HEK293T (cell line): ENCODE measurements at regions of chr3 and their contacts with region 1.

Region 1: DNA sequence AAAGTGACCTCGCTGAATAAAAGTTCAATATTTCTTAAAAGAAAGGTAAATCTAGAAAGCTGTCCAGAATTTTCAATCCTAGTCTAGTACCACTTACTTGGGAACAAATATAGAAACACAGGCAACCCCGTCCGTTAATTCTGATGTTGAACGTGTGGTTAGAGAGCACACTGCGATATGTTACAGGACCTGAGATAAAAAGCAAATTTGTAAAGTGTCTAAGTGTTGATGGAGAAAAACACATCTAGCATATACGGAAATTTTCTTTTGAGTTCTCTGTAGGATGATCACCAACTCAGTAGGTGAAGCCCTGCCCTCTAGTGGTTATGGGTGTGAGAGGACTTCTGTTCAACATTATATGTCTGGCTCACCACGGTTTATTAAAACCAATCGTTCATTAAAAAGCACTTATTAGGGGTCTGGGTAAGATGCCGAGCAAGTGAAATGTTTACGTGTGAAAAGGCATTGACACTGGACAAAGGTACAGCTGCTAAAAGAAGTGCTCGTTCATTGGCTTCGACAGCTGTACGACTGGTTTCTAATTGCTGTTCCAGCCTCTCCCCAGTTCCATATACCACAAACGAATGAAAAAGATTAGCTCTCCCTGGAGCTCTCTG is 1.0 kb upstream of the ATP2C1 start:
- DNase-seq: peak; percentile 62

Region 2: GRCh38 chr3:130746246-130747039 is 146.4 kb before region 1 on chr3 and contains the start of gene PIK3R4:
- CTCF ChIA-PET with region 1: no interaction called
- POLR2A ChIA-PET with region 1: interaction called, 23 read pairs
- DNase-seq: peak; percentile 95

Region 3: DNA sequence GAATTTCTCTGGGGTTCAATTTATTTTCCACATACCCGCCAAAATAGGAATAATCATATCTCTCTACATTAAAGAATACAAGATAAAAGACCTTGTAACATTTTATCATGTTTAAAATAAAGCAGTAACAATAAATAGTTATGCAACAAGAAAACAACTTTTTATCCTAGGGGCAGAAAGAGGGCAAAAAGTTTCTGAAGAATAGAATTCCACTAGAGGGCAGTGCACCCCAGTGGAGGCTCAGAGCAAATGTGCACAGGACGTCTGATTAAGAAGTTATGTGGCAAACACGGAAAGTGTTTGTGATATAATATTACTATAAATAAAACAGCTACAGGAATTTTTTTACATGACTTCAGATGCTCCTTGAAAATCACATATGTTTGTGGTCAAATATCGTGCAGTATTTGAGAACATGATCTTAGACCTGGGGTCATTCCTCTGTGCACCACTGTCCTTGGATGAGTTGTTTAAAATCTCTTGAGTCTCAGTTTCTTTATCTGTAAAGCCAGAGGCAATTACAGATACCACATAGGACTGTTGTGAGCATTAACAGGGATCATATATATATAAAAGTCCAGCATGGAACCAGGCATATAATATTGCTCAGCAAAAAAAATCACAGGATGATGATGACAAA is 133.0 kb before region 1 on chr3:
- CTCF ChIA-PET with region 1: interaction called, 14 read pairs
- POLR2A ChIA-PET with region 1: interaction called, 27 read pairs
- DNase-seq: peak; percentile 56